ENCODE measurements at regions of chr17 and their contacts with region 1.

Region 1: GRCh38 chr17:67717624-67718329 is at the start of gene NOL11:
- DNase-seq: peak; percentile 98
- ATAC-seq: peak; percentile 99
- total RNA-seq, gene NOL11: 26.1 to 32.4 TPM

Region 2: GRCh38 chr17:67366193-67367157 is 351.3 kb before region 1 on chr17 and contains the start of gene PSMD12:
- intact Hi-C with region 1: loop called in 1 of 2 experiments (anchors 10 kb)
- DNase-seq: peak; percentile 96
- ATAC-seq: peak; percentile 98
- total RNA-seq, gene PSMD12: 40.9 to 58.6 TPM

Region 3: DNA sequence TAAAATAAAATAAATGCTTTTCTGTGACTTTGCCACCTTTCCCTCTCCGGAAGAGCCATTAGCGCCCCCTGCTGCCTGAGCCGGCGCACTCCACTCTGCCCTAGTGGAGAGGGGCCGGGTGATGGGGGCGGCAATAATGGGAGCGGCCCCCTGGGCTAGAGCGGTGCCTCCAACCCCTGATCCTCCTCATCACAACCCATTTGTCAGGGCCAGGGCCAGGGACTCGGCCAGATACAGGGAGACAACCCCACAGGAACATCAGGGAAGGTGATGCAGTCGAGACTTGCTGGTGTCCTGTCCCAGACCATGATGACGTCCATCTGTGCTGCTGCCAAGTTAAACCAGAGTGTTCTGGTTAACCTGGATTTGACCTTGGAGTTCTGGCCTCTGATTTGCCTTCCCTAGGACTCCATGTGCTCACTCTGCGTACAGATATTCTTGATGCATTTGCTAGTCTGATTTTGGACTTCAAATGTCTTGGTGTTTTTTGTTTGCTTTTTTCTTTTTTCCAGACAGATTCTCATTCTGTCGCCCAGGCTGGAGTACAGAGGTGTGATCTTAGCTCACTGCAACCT is 61.4 kb after region 1 on chr17:
- intact Hi-C with region 1: loop called in 1 of 2 experiments (anchors 10 kb)
- DNase-seq: peak; percentile 82
- ATAC-seq: peak; percentile 68 to 93

Region 4: GRCh38 chr17:68133346-68134045 is 415.7 kb after region 1 on chr17:
- intact Hi-C with region 1: no loop called
- DNase-seq: peak; percentile 44
- ATAC-seq: peak; percentile 67 to 73

Measured in left cardiac atrium (tissue), 4 donors.